ENCODE measurements at regions of chr10 and their contacts with region 1.

Region 1: GRCh38 chr10:77721815-77722214 is 84.2 kb upstream of the KCNMA1 start:
- DNase-seq: no peak
- H3K4me3 ChIP-seq: no peak overlapping the region
- H3K27ac ChIP-seq: no peak overlapping the region
- H3K27me3 ChIP-seq: no peaks in the 10 kb centered on the region
- CTCF ChIP-seq: no peak

Region 2: DNA sequence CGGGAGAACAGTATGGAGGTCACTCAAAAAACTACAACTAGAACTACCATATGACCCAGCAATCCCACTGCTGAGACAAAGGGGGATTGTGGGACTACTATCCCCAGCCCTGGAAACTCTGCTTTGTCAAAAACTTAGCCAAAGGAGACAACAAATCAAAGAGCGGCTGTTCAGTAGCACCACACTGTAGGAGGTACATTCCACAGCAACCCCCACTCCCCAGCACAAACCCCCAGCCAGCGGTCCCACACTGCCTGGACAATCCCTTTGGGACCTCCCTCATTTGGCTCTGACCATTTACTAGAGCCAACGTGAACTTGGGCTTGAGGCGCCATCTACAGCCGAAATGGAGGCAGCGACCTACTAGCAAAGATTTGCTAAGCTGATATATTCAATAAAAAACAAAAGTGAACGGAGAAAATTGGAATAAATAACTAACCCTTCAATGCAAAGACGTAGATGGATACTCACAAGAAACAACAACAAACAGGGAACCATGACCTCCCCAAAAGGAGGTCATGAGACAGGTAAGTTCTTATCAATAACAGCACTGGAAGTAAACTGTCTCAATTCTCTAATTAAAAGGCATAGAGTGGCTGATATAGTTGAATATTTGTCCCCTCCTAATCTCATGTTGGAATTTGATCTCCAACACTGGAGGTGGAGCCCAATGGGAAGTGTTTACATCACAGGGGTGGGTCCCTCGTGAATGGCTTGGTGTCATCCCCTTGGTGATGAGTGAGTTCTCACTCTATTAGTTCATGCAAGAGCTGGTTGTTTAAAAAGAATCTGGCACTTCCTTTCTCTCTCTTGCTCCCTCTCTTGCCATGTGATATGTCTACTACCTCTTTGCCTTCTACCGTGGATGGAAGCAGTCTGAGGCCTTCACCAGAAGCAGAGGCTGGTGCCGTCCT is 34.8 kb after region 1 on chr10:
- intact Hi-C with region 1: loop called in 1 of 2 experiments (anchors 5 kb)
- DNase-seq: peak in 5 of 10 donors; percentile 29 to 62 (median 54)
- H3K4me3 ChIP-seq: no peak overlapping the region
- H3K27ac ChIP-seq: no peak overlapping the region
- H3K27me3 ChIP-seq: no peaks in the 10 kb centered on the region
- CTCF ChIP-seq: peak in 52 of 56 donors; percentile 23 to 67 (median 47)

Measured in dorsolateral prefrontal cortex (tissue), 120 donors.